AG04450 (cell line): ENCODE measurements at regions of chr13 and their contacts with region 1.

Region 1: DNA sequence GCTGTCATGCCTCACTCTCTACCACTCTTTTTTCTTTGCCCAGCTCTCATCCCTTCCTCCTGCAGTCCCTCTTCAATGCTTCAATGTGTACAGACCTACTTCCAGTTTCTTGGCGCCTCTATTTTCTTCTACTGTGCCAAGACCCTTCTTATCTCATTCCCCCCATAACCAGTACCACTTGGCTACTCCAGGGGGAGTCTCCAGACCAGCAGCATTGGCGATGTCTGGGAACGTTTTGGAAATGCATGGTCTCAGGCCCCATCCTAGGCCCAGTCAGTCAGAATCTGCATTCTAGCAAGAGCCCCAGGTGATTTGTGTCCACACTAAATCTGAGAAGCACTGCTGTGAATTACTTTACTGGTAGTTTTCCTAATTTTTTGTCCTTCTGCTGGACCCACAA is 198.2 kb downstream of the SLC7A1 start:
- DNase-seq: no peak
- H3K4me3 ChIP-seq: no peak overlapping the region
- H3K27ac ChIP-seq: no peak overlapping the region
- H3K27me3 ChIP-seq: peaks cover 5% of the 10 kb centered on the region
- CTCF ChIP-seq: no peak

Region 2: DNA sequence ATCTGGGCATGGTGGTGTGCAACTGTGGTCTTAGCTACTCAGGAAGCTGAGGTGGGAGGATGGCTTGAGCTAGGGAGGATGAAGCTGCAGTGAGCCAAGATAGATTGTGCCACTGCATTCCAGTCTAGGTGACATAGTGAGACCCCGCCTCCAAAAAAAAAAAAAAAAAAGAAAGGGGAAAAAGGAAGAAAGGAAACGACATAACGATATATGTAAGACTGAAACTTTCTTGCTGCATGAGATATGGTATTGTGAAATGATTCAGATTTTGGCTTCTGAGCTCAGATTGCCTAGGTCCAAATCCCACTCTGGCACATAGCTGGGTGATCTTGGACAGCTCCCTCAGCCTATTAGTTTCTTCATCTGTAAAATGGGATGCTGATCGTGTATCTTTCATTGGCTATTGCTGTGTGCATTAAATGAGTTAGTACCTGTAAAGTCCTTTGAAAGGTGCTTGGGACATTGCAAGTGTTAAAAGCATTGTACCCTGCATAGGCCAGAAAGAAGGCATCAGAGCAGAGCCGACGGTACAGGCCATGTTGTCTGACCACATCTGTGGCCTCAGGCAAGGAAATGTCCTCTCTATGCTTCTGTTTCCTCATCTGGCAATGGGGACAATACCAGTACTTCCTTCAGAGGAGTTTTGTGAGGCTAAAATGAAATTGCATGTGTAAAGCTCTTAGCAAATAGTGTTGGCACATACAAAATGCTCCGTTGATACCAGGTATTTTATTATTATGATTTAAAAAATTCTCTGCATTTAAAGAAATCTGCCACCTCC is 645.9 kb before region 1 on chr13:
- CTCF ChIA-PET with region 1: interaction called, 11 read pairs
- POLR2A ChIA-PET with region 1: no interaction called
- DNase-seq: no peak
- H3K4me3 ChIP-seq: no peak overlapping the region
- H3K27ac ChIP-seq: no peak overlapping the region
- H3K27me3 ChIP-seq: no peaks in the 10 kb centered on the region
- CTCF ChIP-seq: no peak

Region 3: GRCh38 chr13:29284726-29285125 is 112.5 kb before region 1 on chr13:
- CTCF ChIA-PET with region 1: no interaction called
- POLR2A ChIA-PET with region 1: no interaction called
- DNase-seq: no peak
- H3K4me3 ChIP-seq: no peak overlapping the region
- H3K27ac ChIP-seq: no peak overlapping the region
- H3K27me3 ChIP-seq: no peaks in the 10 kb centered on the region
- CTCF ChIP-seq: no peak

Region 4: GRCh38 chr13:30065181-30065580 is 667.9 kb after region 1 on chr13:
- CTCF ChIA-PET with region 1: no interaction called
- POLR2A ChIA-PET with region 1: no interaction called
- DNase-seq: no peak
- H3K4me3 ChIP-seq: no peak overlapping the region
- H3K27ac ChIP-seq: no peak overlapping the region
- H3K27me3 ChIP-seq: no peaks in the 10 kb centered on the region
- CTCF ChIP-seq: no peak